ENCODE measurements at regions of chr3 and their contacts with region 1.

Region 1: GRCh38 chr3:52056968-52057805 is 816 bp upstream of the DUSP7 start:
- DNase-seq: peak; percentile 99 to 100 (median 100)

Region 2: DNA sequence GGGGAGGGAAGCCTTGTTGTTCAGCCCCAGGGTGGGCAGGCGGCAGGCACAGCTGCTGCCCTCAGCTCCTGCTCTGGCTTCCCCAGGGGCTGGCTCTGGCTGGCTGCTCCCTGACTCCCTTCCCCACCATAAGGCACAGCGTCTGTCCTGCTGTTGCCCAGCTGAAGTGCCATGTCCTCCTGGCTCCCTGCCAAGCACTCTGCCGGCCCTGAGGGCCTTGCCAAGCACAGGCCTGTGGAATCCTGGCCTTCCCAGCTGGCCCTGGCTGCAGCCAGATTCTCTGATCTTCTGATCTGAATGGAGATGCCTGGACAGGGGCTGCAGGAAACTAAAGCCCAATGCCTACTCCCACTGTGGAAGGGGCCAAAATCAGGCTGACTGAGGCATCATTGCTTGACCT is 279.2 kb before region 1 on chr3:
- intact Hi-C with region 1: no loop called
- DNase-seq: peak in 41 of 42 donors; percentile 6 to 68 (median 46)

Region 3: GRCh38 chr3:51941798-51942602 is 115.2 kb before region 1 on chr3 and contains the starts of genes PARP3 and RRP9:
- intact Hi-C with region 1: no loop called
- DNase-seq: peak; percentile 99 to 100 (median 100)

Region 4: GRCh38 chr3:52123106-52123725 is 66.0 kb after region 1 on chr3:
- intact Hi-C with region 1: loop called (anchors 5 kb)
- DNase-seq: peak; percentile 61 to 92 (median 83)

Region 5: GRCh38 chr3:52162250-52162872 is 105.2 kb after region 1 on chr3:
- intact Hi-C with region 1: no loop called
- DNase-seq: no peak

Region 6: DNA sequence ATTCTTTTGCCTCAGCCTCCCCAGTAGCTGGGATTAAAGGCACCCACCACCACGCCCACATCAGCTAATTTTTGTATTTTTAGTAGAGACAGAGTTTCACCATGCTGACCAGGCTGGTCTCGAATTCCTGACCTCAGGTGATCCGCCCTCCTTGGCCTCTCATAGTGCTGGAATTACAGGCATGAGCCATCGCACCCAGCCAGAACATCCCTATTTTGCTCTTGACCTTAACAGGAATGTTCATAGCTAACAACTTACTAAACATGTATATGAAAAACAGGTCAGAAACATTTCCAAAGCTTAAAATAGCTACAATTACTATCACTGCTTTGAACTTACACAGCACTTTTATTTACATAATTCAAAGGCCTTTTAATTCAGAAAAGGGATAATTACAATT is 512.9 kb after region 1 on chr3:
- intact Hi-C with region 1: no loop called
- DNase-seq: no peak